PC-3 (cell line): ENCODE measurements at regions of chr9 and their contacts with region 1.

Region 1: DNA sequence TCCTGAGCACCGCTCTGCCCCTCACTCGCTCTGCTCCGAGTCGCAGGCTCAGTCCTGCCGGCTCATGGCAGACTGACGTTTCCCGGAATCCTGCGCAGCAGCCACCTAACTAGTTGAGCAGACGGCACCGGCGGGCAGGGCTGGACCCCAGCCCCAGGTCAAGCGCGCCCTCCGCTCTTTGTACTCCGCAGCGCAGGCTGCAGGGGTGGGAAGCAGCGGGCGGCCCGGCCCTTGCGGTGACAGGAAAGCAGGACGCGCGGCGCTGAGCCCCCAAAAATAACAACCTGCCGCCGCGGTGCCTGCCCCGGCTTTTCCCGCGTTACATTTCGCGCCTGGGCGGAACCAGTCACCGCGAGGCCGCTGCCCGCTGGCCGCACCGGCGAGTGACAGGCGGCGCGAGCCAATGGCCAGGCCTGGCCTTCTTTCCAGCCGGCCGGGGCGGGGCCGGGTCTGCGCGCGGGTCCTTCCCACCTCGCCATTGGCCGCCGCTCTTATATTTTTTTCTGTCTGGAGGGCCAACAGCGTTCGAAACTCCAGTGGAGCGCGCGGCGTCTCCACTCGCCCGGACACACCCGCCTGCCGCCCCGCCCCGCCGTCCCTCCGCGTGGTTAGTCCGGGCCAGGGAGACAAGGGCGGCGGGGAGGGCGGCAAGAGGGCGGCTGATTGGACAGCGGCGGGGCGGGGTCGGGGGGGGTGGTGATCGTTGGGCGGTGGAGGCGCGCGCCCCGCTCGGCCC is at the start of gene ZNF367:
- DNase-seq: peak; percentile 91
- ATAC-seq: peak; percentile 72
- H3K4me3 ChIP-seq: peak within 1 kb of the TSS; percentile 85
- H3K27ac ChIP-seq: peak within 1 kb of the TSS; percentile 90
- H3K4me1 ChIP-seq: peaks cover 19% of the 10 kb centered on the region
- H3K27me3 ChIP-seq: no peaks in the 10 kb centered on the region
- CTCF ChIP-seq: no peak
- total RNA-seq, gene ZNF367: 10.8 and 14.0 TPM in 2 replicates

Region 2: DNA sequence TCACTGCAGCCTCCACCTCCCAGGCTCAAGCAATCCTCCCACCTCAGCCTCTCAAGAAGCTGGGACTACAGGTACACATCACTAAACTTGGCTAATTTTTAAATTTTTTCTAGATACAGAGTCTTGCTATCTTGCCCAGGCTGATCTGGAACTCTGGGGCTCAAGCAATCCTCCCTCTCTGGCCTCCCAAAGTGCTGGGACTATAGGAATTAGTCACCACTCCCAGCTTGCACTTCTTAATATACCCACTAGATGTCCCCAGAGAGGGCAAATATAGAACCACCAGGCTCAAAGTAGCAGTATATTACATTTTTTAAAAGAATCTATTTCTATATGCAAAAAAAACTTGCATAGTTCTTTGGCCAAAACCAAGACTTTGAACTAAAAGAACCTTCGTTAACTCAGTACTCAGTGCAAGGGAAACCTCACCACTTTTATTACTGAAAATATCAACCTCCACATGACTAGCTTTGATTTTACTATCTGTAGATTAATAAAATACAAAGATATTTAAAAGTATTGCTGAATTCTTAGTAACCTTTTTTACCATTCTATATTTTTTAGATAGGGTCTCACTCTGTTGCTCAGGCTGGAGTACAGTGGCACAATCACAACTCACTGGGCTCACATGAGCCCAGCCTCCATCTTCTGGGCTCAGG is 90.4 kb before region 1 on chr9:
- CTCF ChIA-PET with region 1: interaction called, 3 read pairs
- POLR2A ChIA-PET with region 1: no interaction called
- intact Hi-C with region 1: loop called (anchors 2 kb)
- DNase-seq: peak; percentile 80
- ATAC-seq: peak; percentile 61
- H3K4me3 ChIP-seq: no peak overlapping the region
- H3K27ac ChIP-seq: no peak overlapping the region
- H3K4me1 ChIP-seq: peaks cover 16% of the 10 kb centered on the region
- H3K27me3 ChIP-seq: no peaks in the 10 kb centered on the region
- CTCF ChIP-seq: peak; percentile 69

Region 3: DNA sequence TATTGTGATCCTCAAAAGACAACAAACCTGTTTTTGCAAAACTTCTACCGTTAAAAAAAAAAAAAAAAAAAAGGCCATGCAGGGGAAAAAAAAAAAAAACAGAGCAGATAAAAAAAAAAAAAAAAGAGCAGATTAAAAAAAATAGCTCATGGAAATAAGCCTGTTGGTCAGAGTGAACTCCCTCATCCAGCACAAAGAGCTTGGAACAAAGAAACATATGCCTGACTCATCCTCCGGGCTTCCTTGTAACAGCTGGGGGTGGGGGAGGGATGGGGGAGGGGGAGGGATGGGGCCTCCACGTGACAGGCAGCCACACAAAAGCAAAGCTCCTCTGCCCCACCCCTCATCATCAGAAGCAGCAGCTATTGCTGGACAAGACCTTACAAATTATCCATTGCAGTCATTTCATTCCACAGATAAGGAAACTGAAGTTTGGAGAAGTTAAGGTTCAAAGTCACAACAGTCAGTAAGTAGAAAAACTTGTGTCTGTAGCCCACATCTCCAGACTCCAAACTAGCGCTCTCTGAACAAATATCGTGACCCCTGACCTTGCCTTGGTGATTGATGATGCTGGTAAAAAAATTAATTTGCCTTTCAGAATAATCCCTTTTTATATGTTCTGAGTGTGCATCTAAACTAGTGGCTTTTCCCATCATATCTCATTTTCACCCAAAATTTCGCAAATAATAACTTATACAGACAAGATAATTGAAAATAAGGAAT is 73.6 kb before region 1 on chr9:
- CTCF ChIA-PET with region 1: no interaction called
- POLR2A ChIA-PET with region 1: interaction called, 14 read pairs
- intact Hi-C with region 1: no loop called
- DNase-seq: peak; percentile 65
- ATAC-seq: peak; percentile 40
- H3K4me3 ChIP-seq: no peak overlapping the region
- H3K27ac ChIP-seq: peak overlapping the region; percentile 36
- H3K4me1 ChIP-seq: peaks cover 21% of the 10 kb centered on the region
- H3K27me3 ChIP-seq: no peaks in the 10 kb centered on the region
- CTCF ChIP-seq: no peak

Region 4: DNA sequence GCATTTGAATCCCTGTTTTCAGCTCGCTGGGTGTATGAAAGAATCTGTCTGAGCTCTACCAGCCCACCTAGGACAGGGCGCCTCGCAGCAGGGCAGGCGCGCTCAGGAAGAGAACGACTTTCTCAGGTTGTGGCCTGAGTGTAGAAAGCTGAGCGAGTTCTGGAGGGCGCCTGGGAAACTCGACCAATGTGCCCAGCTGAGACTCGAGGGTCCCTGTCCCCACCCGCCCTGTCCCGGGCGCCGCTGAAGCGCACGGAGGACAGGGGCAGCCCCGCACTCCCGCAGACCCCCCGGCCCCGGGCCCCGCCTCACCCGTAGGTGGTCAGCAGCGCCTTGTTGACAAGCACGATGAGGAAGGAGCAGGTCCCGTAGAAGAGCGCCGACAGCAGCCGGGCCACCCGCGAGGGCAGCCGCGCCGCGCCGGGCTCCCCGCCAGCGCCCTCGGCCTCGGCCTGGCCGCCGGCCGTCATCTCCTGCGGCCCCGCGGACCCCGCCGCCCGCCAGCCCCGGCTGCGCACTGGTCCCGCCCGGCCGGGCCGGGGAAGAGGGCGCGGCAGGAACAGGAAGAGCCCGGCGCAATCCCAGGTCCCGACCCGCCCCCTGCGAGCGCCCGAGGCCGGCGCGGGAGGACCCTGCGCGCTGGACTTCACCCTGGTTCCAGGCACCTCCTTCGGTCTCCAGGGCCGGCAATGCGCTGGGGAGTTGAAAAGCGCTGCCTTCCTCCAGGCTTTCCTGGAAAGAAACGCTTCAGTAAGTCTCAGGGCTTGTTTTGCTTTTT is 34.9 kb before region 1 on chr9 and contains the start of gene SLC35D2:
- CTCF ChIA-PET with region 1: no interaction called
- POLR2A ChIA-PET with region 1: no interaction called
- intact Hi-C with region 1: loop called (anchors 5 kb)
- DNase-seq: peak; percentile 58
- ATAC-seq: peak; percentile 92
- H3K4me3 ChIP-seq: peak within 1 kb of the TSS; percentile 83
- H3K27ac ChIP-seq: no peak within 1 kb of the TSS
- H3K4me1 ChIP-seq: peaks cover 10% of the 10 kb centered on the region
- H3K27me3 ChIP-seq: no peaks in the 10 kb centered on the region
- CTCF ChIP-seq: no peak
- total RNA-seq, gene SLC35D2: 9.6 and 21.5 TPM in 2 replicates

Region 5: GRCh38 chr9:96449845-96450612 is 31.8 kb after region 1 on chr9 and contains the start of gene HABP4:
- CTCF ChIA-PET with region 1: no interaction called
- POLR2A ChIA-PET with region 1: interaction called, 3 read pairs
- intact Hi-C with region 1: loop called (anchors 2 kb)
- DNase-seq: peak; percentile 91
- ATAC-seq: peak; percentile 93
- H3K4me3 ChIP-seq: peak within 1 kb of the TSS; percentile 77
- H3K27ac ChIP-seq: no peak within 1 kb of the TSS
- H3K4me1 ChIP-seq: peaks cover 18% of the 10 kb centered on the region
- H3K27me3 ChIP-seq: no peaks in the 10 kb centered on the region
- CTCF ChIP-seq: no peak
- total RNA-seq, gene HABP4: 6.6 and 9.2 TPM in 2 replicates